ENCODE measurements at regions of chr10 and their contacts with region 1.

Region 1: DNA sequence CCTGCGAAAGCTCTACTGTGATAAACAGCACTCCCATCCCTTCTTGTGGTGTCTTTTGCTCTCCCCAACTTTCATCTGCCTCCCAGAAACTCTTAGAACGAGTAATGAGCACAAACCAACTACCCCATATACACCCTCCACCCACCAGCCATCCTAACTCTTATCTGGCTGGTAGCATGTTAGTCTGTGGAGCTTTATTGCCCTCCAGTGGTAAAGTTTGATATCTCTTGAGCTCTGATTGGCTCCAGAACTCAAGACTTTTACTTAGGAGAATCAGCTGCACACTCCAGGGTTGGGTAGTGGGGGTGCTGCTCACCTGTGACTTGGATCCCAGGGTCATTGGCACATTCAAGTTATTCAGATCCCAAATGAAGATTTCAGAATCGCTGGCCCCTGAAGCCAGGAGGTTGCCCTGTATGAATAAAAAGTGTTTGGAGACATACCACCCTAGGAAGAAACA is 10.9 kb downstream of the SEC31B start:
- DNase-seq: peak; percentile 59
- ATAC-seq: peak; percentile 52
- H3K4me3 Mint-ChIP-seq: peak overlapping the region; percentile 35
- H3K27ac Mint-ChIP-seq: peak overlapping the region; percentile 86
- H3K4me1 Mint-ChIP-seq: peaks cover 69% of the 10 kb centered on the region
- H3K27me3 Mint-ChIP-seq: no peaks in the 10 kb centered on the region

Region 2: DNA sequence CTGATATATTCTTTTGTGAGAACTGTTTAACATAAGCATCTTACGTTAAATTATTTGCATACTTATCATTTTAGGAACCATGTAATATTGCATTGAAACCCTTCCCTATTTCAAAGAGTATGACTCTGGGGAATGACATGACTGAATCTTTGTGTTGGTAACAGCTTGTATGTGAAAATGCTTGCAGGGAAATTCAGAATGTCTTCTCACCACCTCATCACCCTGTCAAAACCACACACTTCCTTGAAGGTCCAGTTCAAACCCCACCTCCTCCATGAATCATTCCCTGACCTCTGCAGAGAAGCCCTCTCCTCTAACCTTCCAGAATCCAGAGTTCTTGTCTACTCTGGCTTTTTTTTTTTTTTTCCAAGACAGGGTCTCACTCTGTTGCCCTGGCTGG is 1002.3 kb before region 1 on chr10:
- CTCF ChIA-PET with region 1: no interaction called
- POLR2A ChIA-PET with region 1: no interaction called
- intact Hi-C with region 1: no loop called
- DNase-seq: no peak
- ATAC-seq: no peak
- H3K4me3 Mint-ChIP-seq: no peak overlapping the region
- H3K27ac Mint-ChIP-seq: no peak overlapping the region
- H3K4me1 Mint-ChIP-seq: no peaks in the 10 kb centered on the region
- H3K27me3 Mint-ChIP-seq: peaks cover 28% of the 10 kb centered on the region

Region 3: DNA sequence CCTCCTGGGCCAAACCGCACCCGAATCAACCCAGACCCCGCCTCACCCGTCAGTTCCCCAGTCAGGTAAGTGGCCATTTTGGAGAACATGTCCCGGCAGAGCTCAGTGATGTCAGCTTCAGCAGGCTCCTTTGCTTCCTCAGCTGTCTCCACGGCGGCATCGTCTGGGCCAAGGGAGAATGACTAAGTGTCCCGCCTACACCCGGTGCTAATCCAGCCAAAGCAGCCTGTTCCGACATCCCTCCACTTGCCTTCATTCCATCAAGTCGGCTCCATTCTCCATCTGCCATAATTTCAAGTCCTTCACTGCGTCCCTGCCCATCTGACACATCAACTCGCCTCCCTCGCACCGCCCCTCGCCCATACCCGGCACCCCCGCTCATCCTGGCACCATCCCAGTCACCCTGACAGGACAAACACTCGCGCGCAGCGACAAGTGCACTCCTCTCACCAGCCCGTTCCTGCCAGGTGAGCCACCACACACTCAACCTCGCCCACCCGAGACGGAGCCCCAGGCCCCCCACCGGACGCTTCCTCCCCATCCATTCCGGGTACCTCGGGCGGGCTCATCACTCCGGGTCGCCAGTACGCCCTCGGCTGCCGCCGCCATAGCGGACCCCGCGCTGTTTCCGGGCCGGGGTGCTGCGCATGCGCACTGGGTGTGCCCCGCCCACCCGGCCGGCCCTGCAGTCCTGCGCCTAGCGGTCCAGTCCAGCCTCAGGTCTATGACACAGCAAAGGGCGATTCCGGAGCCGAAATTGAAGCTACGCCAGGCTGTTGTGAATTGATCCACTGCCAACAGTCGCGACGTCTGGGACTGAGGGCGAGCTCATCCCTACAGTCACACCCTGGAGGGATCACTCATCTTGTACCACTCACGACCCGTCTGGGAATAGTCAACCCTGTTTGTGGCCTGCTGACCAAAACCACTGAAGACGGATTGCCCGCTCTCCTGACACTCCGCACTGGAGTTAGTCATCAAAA is 222.4 kb before region 1 on chr10 and contains the start of gene BLOC1S2:
- CTCF ChIA-PET with region 1: no interaction called
- POLR2A ChIA-PET with region 1: no interaction called
- intact Hi-C with region 1: loop called in 1 of 2 experiments (anchors 1 kb)
- DNase-seq: peak; percentile 91
- ATAC-seq: peak; percentile 89
- H3K4me3 Mint-ChIP-seq: peak within 1 kb of the TSS; percentile 100
- H3K27ac Mint-ChIP-seq: peak within 1 kb of the TSS; percentile 100
- H3K4me1 Mint-ChIP-seq: peaks cover 24% of the 10 kb centered on the region
- H3K27me3 Mint-ChIP-seq: no peaks in the 10 kb centered on the region
- total RNA-seq, gene BLOC1S2: 45.0 to 45.7 TPM

Region 4: DNA sequence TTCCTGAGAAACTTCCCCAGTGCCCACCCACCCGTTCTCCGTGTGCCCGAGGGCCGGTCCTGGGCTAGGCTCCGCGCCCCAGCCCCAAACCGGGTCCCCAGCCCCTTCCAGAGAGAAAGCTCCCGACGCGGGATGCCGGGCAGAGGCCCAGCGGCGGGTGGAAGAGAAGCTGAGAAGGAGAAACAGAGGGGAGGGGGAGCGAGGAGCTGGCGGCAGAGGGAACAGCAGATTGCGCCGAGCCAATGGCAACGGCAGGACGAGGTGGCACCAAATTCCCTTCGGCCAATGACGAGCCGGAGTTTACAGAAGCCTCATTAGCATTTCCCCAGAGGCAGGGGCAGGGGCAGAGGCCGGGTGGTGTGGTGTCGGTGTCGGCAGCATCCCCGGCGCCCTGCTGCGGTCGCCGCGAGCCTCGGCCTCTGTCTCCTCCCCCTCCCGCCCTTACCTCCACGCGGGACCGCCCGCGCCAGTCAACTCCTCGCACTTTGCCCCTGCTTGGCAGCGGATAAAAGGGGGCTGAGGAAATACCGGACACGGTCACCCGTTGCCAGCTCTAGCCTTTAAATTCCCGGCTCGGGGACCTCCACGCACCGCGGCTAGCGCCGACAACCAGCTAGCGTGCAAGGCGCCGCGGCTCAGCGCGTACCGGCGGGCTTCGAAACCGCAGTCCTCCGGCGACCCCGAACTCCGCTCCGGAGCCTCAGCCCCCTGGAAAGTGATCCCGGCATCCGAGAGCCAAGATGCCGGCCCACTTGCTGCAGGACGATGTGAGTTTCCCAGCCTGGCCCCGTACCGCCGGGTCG is 161.8 kb before region 1 on chr10 and contains the start of gene SCD:
- CTCF ChIA-PET with region 1: interaction called, 12 read pairs
- POLR2A ChIA-PET with region 1: interaction called, 5 read pairs
- intact Hi-C with region 1: loop called (anchors 1 to 2 kb)
- DNase-seq: peak; percentile 94
- ATAC-seq: peak; percentile 92
- H3K4me3 Mint-ChIP-seq: peak within 1 kb of the TSS; percentile 88
- H3K27ac Mint-ChIP-seq: peak within 1 kb of the TSS; percentile 91
- H3K4me1 Mint-ChIP-seq: peaks cover 44% of the 10 kb centered on the region
- H3K27me3 Mint-ChIP-seq: no peaks in the 10 kb centered on the region
- total RNA-seq, gene SCD: 203 to 206 TPM

Region 5: DNA sequence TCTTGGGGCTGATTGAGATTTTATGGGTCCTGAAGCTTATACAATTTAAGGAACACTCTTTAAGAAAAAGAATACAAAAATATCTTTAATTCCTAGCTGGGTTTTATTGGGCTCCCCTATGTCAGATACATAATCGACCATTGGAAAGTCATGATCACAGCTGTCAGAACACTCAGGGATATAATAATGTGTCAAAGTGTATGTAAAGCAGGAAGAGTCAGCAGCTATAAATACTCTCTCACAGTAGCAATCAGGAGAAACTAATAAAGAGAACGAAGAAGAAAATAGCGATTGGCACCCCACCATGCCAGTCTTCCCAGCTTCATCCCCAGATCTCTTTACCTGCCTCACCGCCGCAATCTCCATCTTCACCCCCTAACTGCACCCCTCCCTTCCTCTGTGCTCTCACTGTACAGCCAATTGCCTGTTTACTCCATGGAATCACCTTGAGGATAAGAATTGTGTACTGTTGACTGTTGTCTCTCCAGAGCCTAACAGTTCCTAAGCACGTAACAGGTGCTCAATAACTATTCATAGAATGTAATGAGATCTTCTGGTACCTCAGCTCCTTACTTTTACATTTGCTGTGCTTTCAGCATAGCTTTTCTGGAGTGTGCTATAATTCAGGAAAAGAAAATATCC is 69.9 kb before region 1 on chr10:
- CTCF ChIA-PET with region 1: interaction called, 117 read pairs
- POLR2A ChIA-PET with region 1: no interaction called
- intact Hi-C with region 1: loop called (anchors 1 kb)
- DNase-seq: no peak
- ATAC-seq: no peak
- H3K4me3 Mint-ChIP-seq: no peak overlapping the region
- H3K27ac Mint-ChIP-seq: no peak overlapping the region
- H3K4me1 Mint-ChIP-seq: peaks cover 3% of the 10 kb centered on the region
- H3K27me3 Mint-ChIP-seq: peaks cover 1% of the 10 kb centered on the region

Region 6: DNA sequence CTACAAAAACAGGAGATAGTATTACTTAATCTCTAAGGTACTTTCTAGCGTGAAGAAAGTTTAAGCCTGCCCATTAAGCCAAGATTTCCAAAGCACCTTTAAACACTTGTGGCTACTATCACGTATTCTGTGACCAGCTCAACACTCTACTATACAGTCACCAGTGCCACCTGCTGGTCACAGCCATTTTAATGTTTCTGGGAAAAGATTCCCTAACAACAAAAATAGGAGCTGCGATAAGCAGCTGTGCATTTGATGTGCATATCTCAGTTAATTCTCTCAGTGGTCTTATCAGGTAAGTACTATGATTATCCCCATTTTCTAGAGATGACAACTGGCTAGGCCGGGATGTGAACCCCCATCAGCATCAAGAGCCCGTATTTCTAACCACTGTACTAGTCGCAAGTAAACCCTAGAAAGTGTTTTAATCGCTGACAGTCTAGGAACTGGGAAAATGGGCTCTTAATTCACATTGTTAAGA is 10.1 kb after region 1 on chr10:
- CTCF ChIA-PET with region 1: interaction called, 91 read pairs
- POLR2A ChIA-PET with region 1: interaction called, 4 read pairs
- intact Hi-C with region 1: loop called in 1 of 2 experiments (anchors 1 kb)
- DNase-seq: peak; percentile 82
- ATAC-seq: peak; percentile 76
- H3K4me3 Mint-ChIP-seq: no peak overlapping the region
- H3K27ac Mint-ChIP-seq: peak overlapping the region; percentile 47
- H3K4me1 Mint-ChIP-seq: peaks cover 13% of the 10 kb centered on the region
- H3K27me3 Mint-ChIP-seq: no peaks in the 10 kb centered on the region

Region 7: GRCh38 chr10:100535715-100536353 is 27.1 kb after region 1 on chr10 and contains the start of gene HIF1AN:
- CTCF ChIA-PET with region 1: interaction called, 14 read pairs
- POLR2A ChIA-PET with region 1: no interaction called
- intact Hi-C with region 1: loop called (anchors 1 kb)
- DNase-seq: peak; percentile 93
- ATAC-seq: peak; percentile 96
- H3K4me3 Mint-ChIP-seq: no peak within 1 kb of the TSS
- H3K27ac Mint-ChIP-seq: no peak within 1 kb of the TSS
- H3K4me1 Mint-ChIP-seq: peaks cover 27% of the 10 kb centered on the region
- H3K27me3 Mint-ChIP-seq: no peaks in the 10 kb centered on the region
- total RNA-seq, gene HIF1AN: 45.9 to 50.8 TPM

Region 8: GRCh38 chr10:100637785-100638184 is 129.1 kb after region 1 on chr10:
- CTCF ChIA-PET with region 1: no interaction called
- POLR2A ChIA-PET with region 1: no interaction called
- intact Hi-C with region 1: no loop called
- DNase-seq: peak; percentile 37
- ATAC-seq: peak; percentile 36
- H3K4me3 Mint-ChIP-seq: no peak overlapping the region
- H3K27ac Mint-ChIP-seq: no peak overlapping the region
- H3K4me1 Mint-ChIP-seq: peaks cover 8% of the 10 kb centered on the region
- H3K27me3 Mint-ChIP-seq: peaks cover 37% of the 10 kb centered on the region

Region 9: DNA sequence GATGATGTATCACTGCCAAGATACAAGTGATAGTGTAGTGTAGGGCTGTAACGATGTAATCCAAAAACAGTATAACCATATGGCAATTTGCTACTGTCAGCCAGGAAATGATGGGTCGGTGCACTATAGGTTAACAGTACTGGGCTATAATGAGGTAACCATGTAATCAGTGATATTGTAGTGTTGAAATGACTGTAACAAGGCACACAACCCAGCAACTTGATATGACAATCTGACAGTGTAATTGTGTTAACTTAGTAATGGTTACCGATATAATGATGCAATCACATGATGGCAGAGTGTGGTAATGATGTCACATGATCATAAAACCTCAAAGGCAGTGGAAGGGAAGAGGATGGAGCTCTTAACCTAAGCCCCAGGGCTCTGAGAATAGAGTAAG is 330.3 kb after region 1 on chr10:
- CTCF ChIA-PET with region 1: no interaction called
- POLR2A ChIA-PET with region 1: no interaction called
- intact Hi-C with region 1: no loop called
- DNase-seq: no peak
- ATAC-seq: peak; percentile 92
- H3K4me3 Mint-ChIP-seq: no peak overlapping the region
- H3K27ac Mint-ChIP-seq: no peak overlapping the region
- H3K4me1 Mint-ChIP-seq: no peaks in the 10 kb centered on the region
- H3K27me3 Mint-ChIP-seq: peaks cover 15% of the 10 kb centered on the region